ENCODE measurements at regions of chr15 and their contacts with region 1.

Region 1: DNA sequence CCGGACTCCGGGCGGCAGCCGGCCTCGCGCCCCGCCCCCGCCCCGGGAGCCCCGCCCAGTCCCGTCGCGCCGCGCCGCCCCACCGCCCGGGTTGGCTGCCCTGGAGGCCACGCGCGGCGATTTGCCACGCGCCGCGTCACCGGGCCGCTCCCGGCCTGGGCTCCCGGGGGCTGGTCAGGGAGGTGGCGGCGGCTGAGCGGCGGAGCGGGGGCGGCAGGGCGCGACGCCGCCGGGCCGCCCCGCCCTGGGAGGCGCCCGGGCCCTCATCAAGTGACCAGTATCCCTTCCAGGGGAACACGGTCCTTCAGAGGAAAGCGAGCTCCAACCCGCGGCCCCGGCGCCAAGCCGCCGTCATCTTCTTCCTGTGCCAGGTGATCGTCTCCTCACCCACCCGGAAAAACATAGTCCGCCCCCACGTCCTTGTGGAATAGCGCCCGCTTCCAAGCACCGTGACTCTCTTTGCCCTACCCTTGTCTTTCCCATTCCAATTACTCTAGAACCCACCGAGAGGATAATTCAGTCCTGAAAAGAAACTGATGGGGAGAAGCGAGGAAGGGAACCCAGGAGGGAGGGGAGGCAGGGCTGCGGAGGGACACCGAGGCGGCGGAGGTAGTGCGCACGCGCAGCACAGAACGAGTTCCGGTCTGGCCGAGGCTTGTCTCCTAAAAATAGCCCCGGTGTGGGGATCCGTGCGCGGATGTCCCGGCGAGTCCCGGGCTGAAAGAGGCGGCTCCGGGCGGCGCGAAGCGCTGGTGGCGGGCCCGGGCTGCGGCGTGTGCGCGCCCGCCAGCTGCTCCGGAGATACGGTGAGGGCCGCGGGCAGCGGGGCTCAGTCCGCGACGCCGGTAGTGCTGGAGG is at the start of gene MEF2A:
- DNase-seq: peak; percentile 89
- H3K4me3 ChIP-seq: peak within 1 kb of the TSS; percentile 67 to 90 (median 89)
- H3K27ac ChIP-seq: peak within 1 kb of the TSS; percentile 82
- H3K4me1 ChIP-seq: peaks cover 31% of the 10 kb centered on the region
- H3K27me3 ChIP-seq: no peaks in the 10 kb centered on the region
- CTCF ChIP-seq: no peak
- POLR2A ChIP-seq: peak; percentile 77
- total RNA-seq, gene MEF2A: 45.3 and 50.1 TPM in 2 replicates

Region 2: GRCh38 chr15:99123706-99124451 is 441.6 kb before region 1 on chr15:
- CTCF ChIA-PET with region 1: no interaction called
- POLR2A ChIA-PET with region 1: no interaction called
- dilution Hi-C with region 1: no loop called
- intact Hi-C with region 1: loop called (anchors 5 kb)
- DNase-seq: peak; percentile 95
- H3K4me3 ChIP-seq: no peak overlapping the region
- H3K27ac ChIP-seq: peak overlapping the region; percentile 88
- H3K4me1 ChIP-seq: peaks cover 30% of the 10 kb centered on the region
- H3K27me3 ChIP-seq: no peaks in the 10 kb centered on the region
- CTCF ChIP-seq: no peak
- POLR2A ChIP-seq: no peak

Region 3: GRCh38 chr15:99282121-99282520 is 283.4 kb before region 1 on chr15:
- CTCF ChIA-PET with region 1: interaction called, 7 read pairs
- POLR2A ChIA-PET with region 1: no interaction called
- dilution Hi-C with region 1: no loop called
- intact Hi-C with region 1: loop called (anchors 5 kb)
- DNase-seq: peak; percentile 12
- H3K4me3 ChIP-seq: no peak overlapping the region
- H3K27ac ChIP-seq: no peak overlapping the region
- H3K4me1 ChIP-seq: peaks cover 15% of the 10 kb centered on the region
- H3K27me3 ChIP-seq: no peaks in the 10 kb centered on the region
- CTCF ChIP-seq: no peak
- POLR2A ChIP-seq: no peak

Region 4: GRCh38 chr15:99409097-99409473 is 156.4 kb before region 1 on chr15:
- CTCF ChIA-PET with region 1: interaction called, 32 read pairs
- POLR2A ChIA-PET with region 1: no interaction called
- dilution Hi-C with region 1: no loop called
- intact Hi-C with region 1: loop called (anchors 5 kb)
- DNase-seq: peak; percentile 40
- H3K4me3 ChIP-seq: no peak overlapping the region
- H3K27ac ChIP-seq: no peak overlapping the region
- H3K4me1 ChIP-seq: no peaks in the 10 kb centered on the region
- H3K27me3 ChIP-seq: no peaks in the 10 kb centered on the region
- CTCF ChIP-seq: peak; percentile 30 to 53
- POLR2A ChIP-seq: no peak

Region 5: DNA sequence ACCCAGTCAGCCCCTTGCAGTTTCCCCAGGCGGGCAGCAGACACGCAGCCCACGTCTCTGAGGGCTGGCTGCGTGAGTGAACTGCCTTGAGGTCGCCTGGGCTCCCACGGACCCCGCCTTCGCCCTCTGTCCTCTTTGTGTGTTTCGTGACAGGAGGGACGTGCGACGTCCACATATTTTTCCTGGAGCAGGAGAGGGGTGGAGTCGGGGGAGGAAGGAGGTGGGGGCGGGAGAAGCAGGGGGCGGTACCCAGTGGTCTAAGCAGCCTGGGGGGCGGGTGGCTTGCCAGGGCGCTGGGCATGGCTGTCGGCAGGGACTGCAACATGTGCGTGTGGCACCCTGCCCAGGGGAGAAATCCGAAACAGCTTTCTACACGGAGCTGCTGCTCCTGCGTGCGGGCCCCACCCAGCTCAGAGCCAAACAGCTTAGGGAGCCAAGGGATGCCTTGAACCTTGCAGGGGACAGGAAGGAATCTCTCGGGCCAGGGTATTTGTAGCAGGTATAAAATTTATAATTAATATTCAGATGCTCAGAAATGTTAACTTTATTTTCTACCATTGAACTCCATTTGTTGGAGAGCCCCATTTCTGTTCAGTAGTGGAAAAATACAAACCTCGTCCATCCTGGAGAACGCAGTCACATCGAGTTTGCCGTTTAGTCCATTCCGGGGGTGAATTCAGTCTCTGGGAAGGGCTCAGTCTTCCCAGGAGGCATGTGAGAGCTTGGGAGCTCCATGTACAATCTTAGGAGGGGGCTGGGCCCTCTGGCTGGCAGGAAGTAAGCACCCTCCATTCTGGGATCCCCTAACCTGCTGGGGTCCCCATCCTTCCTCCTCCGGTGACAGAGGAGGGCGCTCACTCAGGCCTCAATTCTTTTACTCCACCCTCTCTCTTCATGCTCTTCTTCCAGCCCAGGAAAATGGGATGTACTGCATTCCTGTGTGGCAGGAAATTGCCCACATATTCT is 78.9 kb before region 1 on chr15:
- CTCF ChIA-PET with region 1: interaction called, 3 read pairs
- POLR2A ChIA-PET with region 1: no interaction called
- dilution Hi-C with region 1: no loop called
- intact Hi-C with region 1: loop called (anchors 1 kb)
- DNase-seq: peak; percentile 61
- H3K4me3 ChIP-seq: peak overlapping the region; percentile 26 to 53 (median 32)
- H3K27ac ChIP-seq: no peak overlapping the region
- H3K4me1 ChIP-seq: peaks cover 18% of the 10 kb centered on the region
- H3K27me3 ChIP-seq: no peaks in the 10 kb centered on the region
- CTCF ChIP-seq: no peak
- POLR2A ChIP-seq: no peak

Region 6: GRCh38 chr15:99536422-99537040 is 29.0 kb before region 1 on chr15:
- CTCF ChIA-PET with region 1: no interaction called
- POLR2A ChIA-PET with region 1: no interaction called
- dilution Hi-C with region 1: no loop called
- intact Hi-C with region 1: loop called (anchors 1 kb)
- DNase-seq: peak; percentile 84
- H3K4me3 ChIP-seq: no peak overlapping the region
- H3K27ac ChIP-seq: peak overlapping the region; percentile 42
- H3K4me1 ChIP-seq: peaks cover 15% of the 10 kb centered on the region
- H3K27me3 ChIP-seq: no peaks in the 10 kb centered on the region
- CTCF ChIP-seq: no peak
- POLR2A ChIP-seq: no peak

Measured in endothelial cell of umbilical vein (primary cell).